Gastrocnemius medialis (tissue), 4 donors: ENCODE measurements at regions of chr19 and their contacts with region 1.

Region 1: DNA sequence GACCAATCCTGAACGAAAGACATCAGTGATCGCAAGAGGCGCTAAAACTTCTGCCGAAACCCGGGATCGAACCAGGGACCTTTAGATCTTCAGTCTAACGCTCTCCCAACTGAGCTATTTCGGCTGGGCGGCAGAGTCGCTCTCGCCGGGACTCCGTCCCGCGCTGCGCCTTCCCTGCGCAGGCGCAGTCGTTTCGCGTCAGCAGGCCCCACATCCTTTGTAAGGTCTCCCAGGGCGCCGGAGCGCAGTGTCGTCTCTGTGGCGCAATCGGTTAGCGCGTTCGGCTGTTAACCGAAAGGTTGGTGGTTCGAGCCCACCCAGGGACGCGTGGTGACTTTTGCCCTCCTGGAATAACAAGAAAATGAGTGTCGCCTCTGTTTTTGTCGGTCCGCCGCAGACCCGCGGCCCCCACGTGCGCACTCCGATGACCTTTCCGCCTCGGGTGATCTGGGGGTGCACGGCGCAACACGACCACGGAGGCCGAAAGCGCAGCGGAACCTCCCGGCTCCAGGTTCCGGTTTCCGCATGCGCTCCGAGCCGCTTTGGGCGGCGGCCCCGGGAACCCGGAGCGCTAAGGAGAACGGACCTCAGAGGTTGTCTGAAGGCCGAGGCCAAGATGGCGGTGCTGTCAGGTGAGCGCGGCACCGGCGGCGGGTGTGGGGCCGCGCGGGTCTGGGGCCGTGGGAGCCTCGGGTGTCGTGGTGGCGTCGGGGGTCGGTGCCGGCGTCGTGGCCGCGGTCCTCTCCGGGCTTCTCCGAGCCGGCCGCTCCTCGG is at the start of gene NDUFS7:
- DNase-seq: peak; percentile 80 to 86
- ATAC-seq: peak; percentile 88 to 92
- H3K4me3 ChIP-seq: peak within 1 kb of the TSS; percentile 83 to 91 (median 85)
- H3K27ac ChIP-seq: peak within 1 kb of the TSS; percentile 93 to 96 (median 94)
- H3K4me1 ChIP-seq: peaks cover 45 to 50% of the 10 kb centered on the region in 2 donors
- H3K27me3 ChIP-seq: no peaks in the 10 kb centered on the region
- CTCF ChIP-seq: peak; percentile 36 to 66 (median 43)
- POLR2A ChIP-seq: peak; percentile 85 to 89
- total RNA-seq, gene NDUFS7: 259 to 497 (median 377) TPM

Region 2: DNA sequence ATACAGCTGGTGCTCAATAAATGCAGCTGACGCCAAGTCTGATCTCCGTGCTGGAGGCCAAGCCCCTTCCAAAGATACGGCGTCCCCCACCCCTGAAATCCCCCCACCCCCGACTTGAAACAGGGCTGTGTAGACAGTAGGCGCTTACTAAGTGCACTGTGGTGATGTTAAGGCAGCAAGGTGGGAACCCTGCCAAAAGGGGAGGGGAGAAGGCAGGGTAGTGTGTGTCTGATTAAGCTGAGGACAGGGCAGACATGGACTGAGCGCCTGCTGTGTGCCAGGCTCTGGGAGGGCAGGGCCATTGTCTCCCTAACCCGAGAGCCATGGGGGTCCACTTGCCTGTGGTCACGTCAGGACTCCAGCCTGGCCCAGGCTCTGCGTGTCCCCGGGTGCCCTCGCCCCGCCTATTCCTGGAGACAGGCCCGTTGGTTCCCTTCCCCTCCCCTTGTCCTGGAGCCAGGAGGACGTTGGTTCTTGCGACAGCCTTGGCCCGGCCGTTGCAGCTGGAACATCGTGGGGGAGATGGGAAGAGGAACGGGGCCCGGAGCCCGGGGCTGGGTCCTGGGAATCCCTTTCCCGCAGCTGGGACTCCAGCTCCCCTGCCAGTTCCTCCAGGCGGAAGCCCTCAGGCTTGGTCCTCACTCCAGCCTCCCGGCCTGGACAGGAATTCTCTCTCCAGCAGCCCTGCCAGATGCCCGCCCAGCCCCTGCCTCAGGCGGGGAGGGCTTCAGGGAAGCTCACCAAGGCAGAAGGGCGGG is 533.1 kb before region 1 on chr19:
- in situ Hi-C with region 1: no loop called
- intact Hi-C with region 1: no loop called
- DNase-seq: peak; percentile 74 to 86
- ATAC-seq: peak; percentile 89 to 90
- H3K4me3 ChIP-seq: peak overlapping the region in 1 of 4 donors; percentile 17
- H3K27ac ChIP-seq: peak overlapping the region; percentile 59 to 79 (median 72)
- H3K4me1 ChIP-seq: peaks cover 0 to 6% of the 10 kb centered on the region in 2 donors
- H3K27me3 ChIP-seq: peaks cover 58 to 66% (median 58%) of the 10 kb centered on the region in 3 donors
- CTCF ChIP-seq: no peak
- POLR2A ChIP-seq: no peak

Region 3: DNA sequence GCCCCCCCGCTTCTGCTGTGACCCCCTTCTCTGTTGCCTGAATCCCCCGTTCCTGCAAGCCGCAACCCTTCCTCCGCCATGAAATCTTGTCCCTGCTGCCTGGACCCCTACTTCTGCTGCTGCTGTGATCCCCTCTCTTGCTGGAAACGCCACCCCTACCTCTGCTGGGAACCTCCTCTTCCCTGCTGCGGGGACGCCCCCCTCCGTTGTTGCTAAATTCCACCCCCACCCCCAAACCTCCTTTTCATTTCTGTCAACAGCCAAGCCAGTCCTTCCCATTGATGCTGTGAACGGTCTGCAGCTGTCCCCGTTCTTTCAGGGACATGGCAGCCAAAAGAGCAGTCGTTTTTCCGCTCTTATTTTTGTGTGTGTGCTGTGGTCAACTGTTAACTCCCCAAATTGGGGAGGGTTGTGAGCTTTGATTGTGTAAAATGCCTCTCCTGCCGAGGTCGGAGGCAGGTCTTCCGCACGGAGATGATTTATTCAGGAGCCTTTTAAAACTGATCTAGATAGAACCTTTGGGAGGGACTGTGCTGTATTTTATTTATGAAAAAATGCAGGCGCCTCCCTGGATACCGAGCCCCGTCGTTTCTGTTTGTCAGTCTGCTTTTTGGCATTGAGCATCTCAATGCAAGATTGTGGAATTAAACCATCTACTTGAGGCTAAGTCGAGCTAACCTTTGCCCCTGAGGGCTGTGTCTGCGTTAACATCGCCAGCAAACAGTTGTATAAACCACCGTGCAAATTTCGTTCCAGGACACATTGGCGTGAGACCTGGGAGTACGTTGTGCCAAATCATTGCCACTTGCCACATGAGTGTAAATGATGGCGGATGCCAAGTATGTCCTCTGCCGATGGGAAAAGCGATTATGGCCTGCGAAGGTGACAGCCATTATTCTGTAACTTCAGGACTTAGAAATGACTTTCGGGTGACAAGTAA is 27.7 kb before region 1 on chr19:
- in situ Hi-C with region 1: no loop called
- intact Hi-C with region 1: loop called (anchors 1 kb)
- DNase-seq: no peak
- ATAC-seq: no peak
- H3K4me3 ChIP-seq: peak overlapping the region; percentile 65 to 80 (median 74)
- H3K27ac ChIP-seq: peak overlapping the region; percentile 82 to 97 (median 90)
- H3K4me1 ChIP-seq: peaks cover 15 to 25% of the 10 kb centered on the region in 2 donors
- H3K27me3 ChIP-seq: no peaks in the 10 kb centered on the region
- CTCF ChIP-seq: no peak
- POLR2A ChIP-seq: no peak

Region 4: DNA sequence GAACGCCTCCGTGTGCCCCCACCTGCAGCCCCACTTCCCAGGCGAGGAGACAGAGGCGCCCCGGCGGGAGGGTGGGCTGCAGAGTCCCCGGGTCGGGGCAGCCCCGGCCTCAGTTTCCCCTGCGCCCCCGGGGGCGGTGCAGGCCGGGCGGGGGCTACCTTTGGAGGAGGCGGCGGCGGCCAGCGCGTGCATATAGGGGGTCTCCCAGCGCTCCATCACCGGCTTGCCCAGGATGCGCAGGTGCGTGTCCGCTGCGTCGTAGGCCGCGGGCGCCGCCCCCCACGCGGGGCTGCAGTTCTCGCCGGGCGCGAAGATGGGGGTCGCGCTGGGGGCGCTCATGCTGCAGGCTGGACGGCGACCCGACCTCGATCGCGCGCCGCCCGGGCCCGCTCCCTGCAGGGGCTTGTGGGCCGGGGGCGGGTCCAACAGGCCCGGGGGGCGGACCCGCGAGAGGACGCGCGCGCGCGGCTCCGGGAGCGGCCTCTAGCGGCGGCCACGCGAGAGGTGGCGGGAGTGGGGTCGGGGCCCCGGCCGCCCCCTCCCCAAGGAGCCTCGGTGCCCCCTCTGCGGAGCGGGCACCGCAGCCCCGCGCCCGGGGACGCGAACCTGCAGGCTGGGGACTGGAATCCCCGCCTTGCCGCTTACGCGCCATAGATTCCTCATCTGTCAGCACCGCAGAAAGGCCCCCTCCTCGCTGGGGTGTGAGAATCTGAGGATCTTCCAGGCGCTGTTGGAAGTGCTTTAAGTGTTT is 17.8 kb after region 1 on chr19 and contains the start of gene GAMT:
- in situ Hi-C with region 1: no loop called
- intact Hi-C with region 1: loop called (anchors 2 kb)
- DNase-seq: no peak
- ATAC-seq: peak; percentile 37 to 40
- H3K4me3 ChIP-seq: peak within 1 kb of the TSS; percentile 60 to 90 (median 63)
- H3K27ac ChIP-seq: peak within 1 kb of the TSS; percentile 88 to 99 (median 91)
- H3K4me1 ChIP-seq: peaks cover 11 to 14% of the 10 kb centered on the region in 2 donors
- H3K27me3 ChIP-seq: no peaks in the 10 kb centered on the region
- CTCF ChIP-seq: peak; percentile 34 to 66 (median 46)
- POLR2A ChIP-seq: no peak
- total RNA-seq, gene GAMT: 269 to 421 (median 373) TPM

Region 5: DNA sequence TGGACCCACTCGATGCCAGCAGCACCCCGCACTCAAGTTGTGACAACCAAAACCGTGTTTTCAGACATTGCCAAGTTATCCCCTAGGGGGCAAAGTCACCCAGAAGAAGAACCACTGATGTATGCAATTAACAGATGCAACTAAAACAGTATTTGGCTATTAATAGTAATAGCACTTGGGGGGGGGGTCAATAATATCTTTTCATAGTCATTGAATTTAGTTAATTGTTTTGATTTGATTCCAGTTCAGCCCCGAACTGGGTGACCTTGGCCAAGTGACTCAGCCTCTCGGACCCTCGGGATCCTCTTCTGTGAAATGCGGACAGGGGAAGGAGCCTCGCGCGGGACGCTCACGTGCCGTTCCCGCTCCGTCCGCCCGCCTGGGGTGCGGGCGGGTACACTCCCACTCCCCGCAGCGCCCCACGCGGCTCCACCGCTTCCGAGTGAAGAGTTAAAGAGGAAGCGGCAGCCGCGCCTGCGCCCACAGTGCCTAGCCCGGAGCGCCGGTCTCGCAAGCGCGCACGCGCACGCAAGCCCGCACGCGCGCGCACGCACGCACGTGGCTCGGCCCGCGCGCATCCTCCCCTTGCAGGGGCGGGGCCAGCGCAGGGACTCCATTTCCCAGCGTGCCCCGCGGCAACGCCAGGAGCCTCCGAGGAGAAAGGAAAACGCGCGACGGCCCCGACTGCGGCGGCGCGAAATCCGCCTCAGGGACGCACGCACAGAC is 23.4 kb after region 1 on chr19:
- in situ Hi-C with region 1: no loop called
- intact Hi-C with region 1: loop called (anchors 1 kb)
- DNase-seq: peak; percentile 97 to 99
- ATAC-seq: peak; percentile 76 to 84
- H3K4me3 ChIP-seq: peak overlapping the region; percentile 59 to 75 (median 70)
- H3K27ac ChIP-seq: peak overlapping the region; percentile 90 to 95 (median 92)
- H3K4me1 ChIP-seq: peaks cover 32 to 33% of the 10 kb centered on the region in 2 donors
- H3K27me3 ChIP-seq: no peaks in the 10 kb centered on the region
- CTCF ChIP-seq: peak in 4 of 5 experiments; percentile 24 to 46 (median 34)
- POLR2A ChIP-seq: peak in 1 of 2 donors; percentile 24

Region 6: DNA sequence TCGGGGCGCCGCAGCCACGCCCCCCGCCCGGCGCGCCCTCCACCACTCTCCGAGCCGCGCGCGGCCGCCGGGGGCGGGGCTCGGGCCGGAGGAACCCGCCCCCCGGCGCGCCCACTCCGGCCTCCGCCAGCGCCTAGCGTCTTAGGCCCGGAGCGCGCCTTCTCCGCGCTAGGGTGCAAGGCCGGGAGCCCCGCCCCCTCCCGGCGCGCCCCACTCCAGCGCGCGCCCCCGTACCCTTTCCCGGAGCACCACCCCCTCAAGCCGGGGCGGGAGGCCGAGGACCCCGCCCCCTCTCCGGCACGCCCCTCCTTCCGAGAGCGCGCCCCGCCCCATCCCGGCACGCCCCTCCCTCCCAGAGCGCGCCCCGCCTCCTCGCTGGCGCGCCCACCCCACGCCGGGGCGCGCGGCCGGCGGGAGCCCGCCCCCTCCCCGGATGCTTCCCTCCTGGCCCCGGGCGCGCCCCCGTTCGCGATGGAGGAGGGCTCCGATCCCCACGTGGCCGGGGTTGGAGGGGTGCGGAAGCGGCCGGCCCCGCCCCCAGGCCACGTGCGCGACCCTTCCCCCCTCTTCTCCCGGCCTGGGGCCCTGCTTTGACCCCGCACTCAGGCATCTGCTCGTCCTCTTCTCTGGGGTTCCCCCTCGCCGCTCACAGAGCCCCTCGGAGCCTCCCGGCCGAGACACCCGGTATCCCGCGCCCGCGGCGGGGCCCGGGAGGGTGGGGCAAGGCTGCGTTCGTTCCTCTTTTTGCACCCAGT is 480.4 kb after region 1 on chr19:
- in situ Hi-C with region 1: no loop called
- intact Hi-C with region 1: loop called (anchors 10 kb)
- DNase-seq: peak; percentile 74 to 76
- ATAC-seq: peak; percentile 83
- H3K4me3 ChIP-seq: peak overlapping the region; percentile 67 to 95 (median 82)
- H3K27ac ChIP-seq: peak overlapping the region; percentile 76 to 92 (median 84)
- H3K4me1 ChIP-seq: peaks cover 7 to 18% of the 10 kb centered on the region in 2 donors
- H3K27me3 ChIP-seq: peaks cover 0 to 8% (median 6%) of the 10 kb centered on the region in 3 donors
- CTCF ChIP-seq: no peak
- POLR2A ChIP-seq: peak; percentile 33 to 34